ENCODE measurements at regions of chr2 and their contacts with region 1.

Region 1: DNA sequence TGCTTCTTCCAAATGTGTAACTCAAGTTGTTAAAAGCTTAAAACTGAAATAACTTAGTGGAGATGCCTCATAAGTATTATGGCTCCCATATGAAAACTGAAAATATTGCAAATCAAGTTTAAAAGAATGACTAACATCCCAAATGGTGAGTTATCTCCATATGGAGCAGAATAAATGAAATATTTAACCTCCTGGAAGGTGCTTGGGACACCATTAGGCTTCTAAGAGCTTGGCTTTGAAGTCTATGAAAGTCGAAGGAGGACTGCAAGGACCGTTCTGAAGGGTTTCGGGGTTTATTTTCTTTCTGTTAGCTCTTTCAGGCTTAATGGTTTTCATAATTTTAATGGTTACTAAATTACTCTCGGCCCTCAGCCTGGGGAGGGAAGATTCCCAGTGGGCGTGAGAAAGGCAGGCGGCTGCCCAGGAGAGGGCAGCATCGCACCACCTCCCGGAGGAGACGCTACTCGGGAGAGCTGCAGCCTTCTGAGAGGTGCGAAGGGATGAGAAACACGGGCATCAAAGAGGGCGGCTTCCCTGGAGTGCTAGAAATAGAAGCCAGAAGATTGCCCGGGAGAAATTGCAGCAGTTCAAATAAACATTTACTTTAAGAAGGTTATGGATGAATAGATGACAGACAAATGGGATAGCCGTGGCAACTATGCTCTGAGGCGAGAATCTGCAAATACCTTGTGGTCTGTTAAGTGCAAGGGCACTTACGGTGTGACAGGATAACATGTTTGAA is 43.1 kb downstream of the MAP3K19 start:
- DNase-seq: peak; percentile 57
- ATAC-seq: peak; percentile 100
- H3K4me3 ChIP-seq: no peak overlapping the region
- H3K27ac ChIP-seq: no peak overlapping the region
- H3K4me1 ChIP-seq: peaks cover 4% of the 10 kb centered on the region
- H3K27me3 ChIP-seq: peaks cover 3% of the 10 kb centered on the region; the same call in 1 of the 2 replicates
- CTCF ChIP-seq: peak; percentile 97

Region 2: GRCh38 chr2:133862400-133862977 is 1141.7 kb before region 1 on chr2:
- CTCF ChIA-PET with region 1: no interaction called
- POLR2A ChIA-PET with region 1: no interaction called
- in situ Hi-C with region 1: no loop called
- intact Hi-C with region 1: no loop called
- DNase-seq: no peak
- ATAC-seq: no peak
- H3K4me3 ChIP-seq: no peak overlapping the region
- H3K27ac ChIP-seq: no peak overlapping the region
- H3K4me1 ChIP-seq: no peaks in the 10 kb centered on the region
- H3K27me3 ChIP-seq: no peaks in the 10 kb centered on the region
- CTCF ChIP-seq: no peak

Region 3: DNA sequence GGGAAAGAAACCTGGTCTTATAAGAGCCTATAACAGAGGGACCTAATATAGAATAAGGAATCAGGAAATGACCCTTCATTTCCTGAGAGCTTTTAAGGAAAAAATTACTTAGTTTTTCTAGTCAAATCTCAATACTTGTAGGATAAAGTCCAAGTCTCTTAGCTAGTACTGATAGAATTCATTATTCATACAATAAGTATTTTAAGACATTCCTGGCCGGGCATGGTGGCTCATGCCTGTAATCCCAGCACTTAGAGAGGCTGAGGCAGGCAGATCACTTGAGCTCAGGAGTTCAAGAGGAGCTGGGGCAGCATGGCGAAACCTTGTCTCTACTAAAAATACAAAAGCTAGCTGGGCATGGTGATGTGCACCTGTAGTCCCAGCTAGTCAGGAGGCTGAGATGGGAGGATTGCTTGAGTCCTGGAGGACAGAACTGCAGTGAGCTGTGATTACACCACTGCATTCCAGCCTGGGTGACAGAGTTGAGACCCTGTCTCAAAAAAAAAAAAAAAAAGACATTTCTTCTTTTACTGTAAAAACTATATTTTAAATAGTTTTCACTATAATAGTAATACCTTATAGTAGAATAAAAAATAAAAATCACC is 51.1 kb after region 1 on chr2:
- CTCF ChIA-PET with region 1: no interaction called
- POLR2A ChIA-PET with region 1: no interaction called
- in situ Hi-C with region 1: no loop called
- intact Hi-C with region 1: no loop called
- DNase-seq: no peak
- ATAC-seq: no peak
- H3K4me3 ChIP-seq: no peak overlapping the region
- H3K27ac ChIP-seq: no peak overlapping the region
- H3K4me1 ChIP-seq: peaks cover 14% of the 10 kb centered on the region
- H3K27me3 ChIP-seq: no peaks in the 10 kb centered on the region
- CTCF ChIP-seq: no peak

Region 4: GRCh38 chr2:135132314-135132713 is 128.1 kb after region 1 on chr2:
- CTCF ChIA-PET with region 1: no interaction called
- POLR2A ChIA-PET with region 1: no interaction called
- in situ Hi-C with region 1: no loop called
- intact Hi-C with region 1: no loop called
- DNase-seq: no peak
- ATAC-seq: no peak
- H3K4me3 ChIP-seq: no peak overlapping the region
- H3K27ac ChIP-seq: no peak overlapping the region
- H3K4me1 ChIP-seq: no peaks in the 10 kb centered on the region
- H3K27me3 ChIP-seq: no peaks in the 10 kb centered on the region
- CTCF ChIP-seq: no peak

Region 5: GRCh38 chr2:135164441-135164840 is 160.3 kb after region 1 on chr2:
- CTCF ChIA-PET with region 1: no interaction called
- POLR2A ChIA-PET with region 1: no interaction called
- in situ Hi-C with region 1: no loop called
- intact Hi-C with region 1: loop called (anchors 10 kb)
- DNase-seq: no peak
- ATAC-seq: peak; percentile 74
- H3K4me3 ChIP-seq: no peak overlapping the region
- H3K27ac ChIP-seq: no peak overlapping the region
- H3K4me1 ChIP-seq: no peaks in the 10 kb centered on the region
- H3K27me3 ChIP-seq: no peaks in the 10 kb centered on the region
- CTCF ChIP-seq: no peak

Region 6: DNA sequence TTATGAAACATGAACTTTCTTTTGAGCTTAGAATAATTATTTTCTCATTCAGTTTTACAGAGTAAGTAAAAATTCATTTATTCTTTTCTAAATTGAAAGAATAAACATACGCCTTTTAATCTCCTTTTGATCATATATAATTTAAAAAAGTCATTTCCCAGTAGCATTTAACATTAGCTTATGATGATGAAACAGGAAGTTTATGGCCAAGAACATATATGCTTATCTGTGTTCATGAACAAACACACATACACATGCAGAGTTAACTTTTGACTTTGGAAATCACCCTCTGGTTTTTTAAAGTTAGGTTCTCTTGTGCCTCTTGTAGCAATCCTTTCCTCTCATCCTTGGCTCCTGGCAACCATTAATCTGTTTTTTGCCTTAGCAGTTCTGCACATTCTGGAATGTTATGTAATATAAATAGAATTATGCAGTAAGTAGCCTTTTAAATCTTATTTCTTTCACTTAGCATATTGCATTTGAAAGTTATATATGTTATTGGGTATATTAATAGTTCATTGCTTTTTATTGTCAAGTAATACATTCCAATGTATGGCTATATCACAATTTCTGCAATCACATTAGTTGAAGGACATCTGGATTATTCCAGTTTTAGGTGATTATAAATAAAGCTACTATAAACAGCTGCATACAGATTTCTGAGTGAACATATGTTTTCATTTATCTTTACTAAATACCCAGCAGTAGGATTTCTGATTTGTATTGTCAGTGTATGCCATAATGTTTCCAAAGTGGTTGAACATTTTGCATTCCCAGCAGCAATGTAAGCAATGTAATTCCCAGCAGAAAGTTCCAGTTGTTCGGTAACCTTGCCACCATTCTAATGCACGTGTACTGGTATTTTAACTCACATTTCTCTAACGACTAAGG is 316.5 kb after region 1 on chr2:
- CTCF ChIA-PET with region 1: no interaction called
- POLR2A ChIA-PET with region 1: no interaction called
- in situ Hi-C with region 1: no loop called
- intact Hi-C with region 1: no loop called
- DNase-seq: no peak
- ATAC-seq: no peak
- H3K4me3 ChIP-seq: no peak overlapping the region
- H3K27ac ChIP-seq: no peak overlapping the region
- H3K4me1 ChIP-seq: no peaks in the 10 kb centered on the region
- H3K27me3 ChIP-seq: no peaks in the 10 kb centered on the region
- CTCF ChIP-seq: no peak

Region 7: DNA sequence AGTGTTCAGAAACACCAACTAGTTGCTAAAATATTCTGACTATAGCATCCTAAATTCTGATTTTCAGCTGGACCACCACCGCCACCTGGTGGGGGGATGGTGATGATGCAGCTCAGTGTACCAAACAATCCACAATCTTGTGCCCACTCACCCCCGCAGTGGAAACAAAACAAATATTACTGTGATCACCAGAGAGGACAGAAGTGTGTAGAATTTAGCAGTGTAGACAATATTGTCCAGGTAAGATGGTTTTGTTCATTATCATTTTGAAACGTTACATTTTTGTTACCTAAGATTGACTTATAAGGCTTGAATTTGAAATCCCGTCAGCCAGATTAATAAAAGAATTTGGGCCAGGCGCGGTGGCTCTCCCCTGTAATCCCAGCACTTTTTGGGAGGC is 705.8 kb after region 1 on chr2:
- CTCF ChIA-PET with region 1: interaction called, 4 read pairs
- POLR2A ChIA-PET with region 1: no interaction called
- in situ Hi-C with region 1: no loop called
- intact Hi-C with region 1: loop called (anchors 10 kb)
- DNase-seq: no peak
- ATAC-seq: peak; percentile 70
- H3K4me3 ChIP-seq: no peak overlapping the region
- H3K27ac ChIP-seq: no peak overlapping the region
- H3K4me1 ChIP-seq: no peaks in the 10 kb centered on the region
- H3K27me3 ChIP-seq: no peaks in the 10 kb centered on the region
- CTCF ChIP-seq: peak; percentile 95

Measured in Panc1 (cell line).